ENCODE measurements at regions of chr3 and their contacts with region 1.

Region 1: GRCh38 chr3:136919799-136920580 is 37.8 kb upstream of the IL20RB start:
- DNase-seq: peak in 7 of 9 donors; percentile 8 to 51 (median 40)
- ATAC-seq: peak; percentile 94
- H3K4me3 ChIP-seq: no peak overlapping the region
- H3K4me3 Mint-ChIP-seq: peak overlapping the region in 8 of 10 donors; percentile 47 to 69 (median 60)
- H3K27ac ChIP-seq: peak overlapping the region; percentile 38
- H3K27ac Mint-ChIP-seq: peak overlapping the region in 6 of 9 donors; percentile 6 to 83 (median 70)
- H3K4me1 ChIP-seq: peaks cover 21 to 78% of the 10 kb centered on the region in 2 donors
- H3K4me1 Mint-ChIP-seq: peaks cover 60 to 94% (median 90%) of the 10 kb centered on the region in 7 donors
- H3K27me3 ChIP-seq: no peaks in the 10 kb centered on the region
- H3K27me3 Mint-ChIP-seq: no peaks in the 10 kb centered on the region

Region 2: DNA sequence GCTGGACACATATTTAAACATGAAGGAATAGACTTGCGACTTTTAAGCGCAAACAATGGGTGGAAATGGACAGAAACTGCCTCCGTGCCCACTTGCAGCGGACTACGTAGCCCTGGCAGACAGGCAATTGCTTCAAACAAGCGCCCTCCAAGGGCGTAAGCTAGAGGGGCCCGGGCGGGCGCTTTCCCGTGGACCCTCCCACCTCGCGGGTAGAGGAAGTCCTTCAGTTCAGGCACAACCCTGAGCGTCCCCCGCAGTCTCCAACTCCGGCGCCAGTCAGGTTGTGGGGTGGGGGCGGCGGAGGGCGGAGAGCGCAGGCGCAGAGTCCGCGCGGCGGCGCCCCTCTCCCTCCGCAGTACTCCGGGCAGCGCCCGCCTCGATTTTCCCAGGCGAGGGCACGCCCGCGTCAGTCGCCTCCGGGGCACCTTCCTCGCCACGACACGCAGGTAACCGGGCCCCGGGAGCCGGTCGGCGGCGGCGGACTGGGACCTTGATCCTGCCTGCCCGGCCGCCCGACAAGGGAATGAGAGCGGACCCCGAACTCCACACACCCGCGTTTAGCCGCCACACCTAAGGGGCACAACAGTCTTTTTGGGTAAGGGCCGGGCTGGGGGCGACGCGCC is 101.1 kb before region 1 on chr3 and contains the start of gene SLC35G2:
- CTCF ChIA-PET with region 1: no interaction called
- POLR2A ChIA-PET with region 1: no interaction called
- intact Hi-C with region 1: loop called in 1 of 2 experiments (anchors 1 kb)
- DNase-seq: peak in 4 of 9 donors; percentile 7 to 63 (median 10)
- ATAC-seq: peak; percentile 67
- H3K4me3 ChIP-seq: peak within 1 kb of the TSS; percentile 44
- H3K4me3 Mint-ChIP-seq: peak within 1 kb of the TSS; percentile 83 to 94 (median 86)
- H3K27ac ChIP-seq: no peak within 1 kb of the TSS
- H3K27ac Mint-ChIP-seq: peak within 1 kb of the TSS in 1 of 9 donors; percentile 52
- H3K4me1 ChIP-seq: peaks cover 6 to 10% of the 10 kb centered on the region in 2 donors
- H3K4me1 Mint-ChIP-seq: peaks cover 10 to 23% (median 19%) of the 10 kb centered on the region in 7 donors
- H3K27me3 ChIP-seq: peaks cover 0 to 3% of the 10 kb centered on the region in 2 donors
- H3K27me3 Mint-ChIP-seq: peaks cover 50 to 65% (median 56%) of the 10 kb centered on the region in 5 donors
- total RNA-seq, gene SLC35G2: 0.60 TPM in 1 of 5 experiments, not detected in the others

Region 3: DNA sequence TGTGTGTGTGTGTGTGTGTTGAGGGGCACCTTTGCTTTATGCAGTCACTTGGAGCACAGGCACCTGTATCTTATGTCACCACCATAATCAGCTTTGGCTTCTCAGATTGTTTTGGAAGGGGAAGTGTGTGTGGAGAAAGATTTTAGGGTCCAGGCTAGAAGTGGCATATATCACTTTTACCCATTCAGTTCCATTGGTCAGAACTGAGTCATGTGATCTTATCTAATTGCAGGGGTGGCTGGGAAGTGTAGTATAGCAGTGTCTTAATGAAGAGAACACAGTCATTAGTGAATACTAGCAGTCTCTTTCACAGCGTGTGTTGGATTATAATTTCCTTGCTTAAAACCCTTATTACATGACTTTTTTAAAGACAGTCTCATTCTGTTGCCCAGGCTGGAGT is 37.4 kb before region 1 on chr3:
- CTCF ChIA-PET with region 1: no interaction called
- POLR2A ChIA-PET with region 1: no interaction called
- intact Hi-C with region 1: loop called (anchors 2 kb)
- DNase-seq: peak in 3 of 9 donors; percentile 12 to 28 (median 28)
- ATAC-seq: peak; percentile 73
- H3K4me3 ChIP-seq: no peak overlapping the region
- H3K4me3 Mint-ChIP-seq: peak overlapping the region in 4 of 10 donors; percentile 9 to 60 (median 52)
- H3K27ac ChIP-seq: no peak overlapping the region
- H3K27ac Mint-ChIP-seq: peak overlapping the region in 7 of 9 donors; percentile 6 to 85 (median 55)
- H3K4me1 ChIP-seq: peaks cover 33 to 38% of the 10 kb centered on the region in 2 donors
- H3K4me1 Mint-ChIP-seq: peaks cover 39 to 97% (median 83%) of the 10 kb centered on the region in 7 donors
- H3K27me3 ChIP-seq: no peaks in the 10 kb centered on the region
- H3K27me3 Mint-ChIP-seq: no peaks in the 10 kb centered on the region

Region 4: DNA sequence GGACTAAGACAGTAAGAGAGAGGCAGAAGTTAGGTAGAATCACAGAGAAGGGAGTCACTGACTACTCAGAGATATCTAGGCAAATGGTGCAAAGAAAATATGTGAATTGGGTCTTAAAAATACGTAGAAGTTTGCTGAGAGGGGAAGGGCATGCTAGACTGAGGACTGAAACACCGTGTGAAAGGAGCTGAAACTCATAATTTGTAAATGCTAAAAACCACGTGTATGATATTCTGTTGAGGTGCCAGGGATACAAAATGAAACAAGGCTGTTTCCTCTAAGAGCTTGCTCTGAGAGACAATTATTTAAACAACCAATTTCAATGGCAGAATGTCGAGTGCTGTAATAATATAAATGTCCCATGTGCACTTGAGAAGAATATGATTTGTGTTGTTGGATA is 10.8 kb before region 1 on chr3:
- CTCF ChIA-PET with region 1: interaction called, 3 read pairs
- POLR2A ChIA-PET with region 1: interaction called, 7 read pairs
- intact Hi-C with region 1: loop called in 1 of 2 experiments (anchors 1 kb)
- DNase-seq: no peak
- ATAC-seq: peak; percentile 51
- H3K4me3 ChIP-seq: no peak overlapping the region
- H3K4me3 Mint-ChIP-seq: peak overlapping the region in 9 of 10 donors; percentile 7 to 67 (median 45)
- H3K27ac ChIP-seq: no peak overlapping the region
- H3K27ac Mint-ChIP-seq: peak overlapping the region; percentile 6 to 90 (median 53)
- H3K4me1 ChIP-seq: peaks cover 39 to 62% of the 10 kb centered on the region in 2 donors
- H3K4me1 Mint-ChIP-seq: peaks cover 50 to 94% (median 80%) of the 10 kb centered on the region in 7 donors
- H3K27me3 ChIP-seq: no peaks in the 10 kb centered on the region
- H3K27me3 Mint-ChIP-seq: no peaks in the 10 kb centered on the region

Region 5: DNA sequence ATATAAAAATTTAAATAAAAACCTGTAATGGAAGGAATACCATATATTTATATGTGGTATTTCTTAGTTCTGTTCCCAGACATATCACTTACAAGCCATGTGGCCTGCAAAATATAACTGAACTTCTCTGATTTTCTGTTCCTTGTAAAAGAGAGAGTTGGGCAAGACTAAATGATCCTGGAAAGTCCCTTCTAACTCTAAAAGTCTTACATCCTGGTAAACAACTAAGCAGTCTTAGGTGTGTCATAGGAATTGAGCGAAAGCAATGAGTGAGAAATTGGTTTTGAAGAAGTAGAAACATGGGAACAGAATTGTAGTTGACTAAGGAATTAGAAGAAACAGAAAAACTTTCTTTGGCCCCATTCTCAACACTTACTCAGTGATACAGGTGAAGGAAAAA is 12.5 kb after region 1 on chr3:
- CTCF ChIA-PET with region 1: no interaction called
- POLR2A ChIA-PET with region 1: no interaction called
- intact Hi-C with region 1: loop called in 1 of 2 experiments (anchors 1 kb)
- DNase-seq: no peak
- ATAC-seq: peak; percentile 37
- H3K4me3 ChIP-seq: no peak overlapping the region
- H3K4me3 Mint-ChIP-seq: peak overlapping the region in 2 of 10 donors; percentile 8 to 34
- H3K27ac ChIP-seq: no peak overlapping the region
- H3K27ac Mint-ChIP-seq: peak overlapping the region in 8 of 9 donors; percentile 22 to 83 (median 65)
- H3K4me1 ChIP-seq: peaks cover 16 to 18% of the 10 kb centered on the region in 2 donors
- H3K4me1 Mint-ChIP-seq: peaks cover 26 to 82% (median 75%) of the 10 kb centered on the region in 7 donors
- H3K27me3 ChIP-seq: no peaks in the 10 kb centered on the region
- H3K27me3 Mint-ChIP-seq: no peaks in the 10 kb centered on the region

Region 6: DNA sequence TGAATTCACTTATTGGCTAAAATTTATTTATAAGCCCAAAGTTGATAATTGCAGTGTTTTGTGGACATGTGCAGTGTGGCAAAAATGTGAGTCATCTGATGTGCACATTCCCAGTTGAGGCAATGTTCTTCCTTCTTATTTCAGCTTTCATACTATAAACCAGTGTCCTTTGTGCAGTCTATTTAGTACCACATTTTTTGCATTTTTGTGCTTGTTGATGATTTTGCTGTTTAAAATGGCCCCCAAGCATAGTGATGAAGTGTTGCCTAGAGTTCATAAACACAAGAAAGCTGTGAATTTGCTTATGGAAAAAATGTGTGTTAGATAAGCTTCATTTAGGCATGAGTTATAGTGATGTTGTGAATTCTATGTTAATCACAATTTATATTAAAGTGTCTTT is 18.3 kb after region 1 on chr3:
- CTCF ChIA-PET with region 1: no interaction called
- POLR2A ChIA-PET with region 1: no interaction called
- intact Hi-C with region 1: loop called in 1 of 2 experiments (anchors 2 kb)
- DNase-seq: no peak
- ATAC-seq: no peak
- H3K4me3 ChIP-seq: no peak overlapping the region
- H3K4me3 Mint-ChIP-seq: peak overlapping the region in 3 of 10 donors; percentile 2 to 66 (median 16)
- H3K27ac ChIP-seq: no peak overlapping the region
- H3K27ac Mint-ChIP-seq: peak overlapping the region in 1 of 9 donors; percentile 13
- H3K4me1 ChIP-seq: peaks cover 10 to 35% of the 10 kb centered on the region in 2 donors
- H3K4me1 Mint-ChIP-seq: peaks cover 45 to 82% (median 69%) of the 10 kb centered on the region in 7 donors
- H3K27me3 ChIP-seq: no peaks in the 10 kb centered on the region
- H3K27me3 Mint-ChIP-seq: no peaks in the 10 kb centered on the region

Region 7: GRCh38 chr3:137047240-137047639 is 127.2 kb after region 1 on chr3:
- CTCF ChIA-PET with region 1: no interaction called
- POLR2A ChIA-PET with region 1: no interaction called
- intact Hi-C with region 1: no loop called
- DNase-seq: no peak
- ATAC-seq: no peak
- H3K4me3 ChIP-seq: no peak overlapping the region
- H3K4me3 Mint-ChIP-seq: no peak overlapping the region
- H3K27ac ChIP-seq: no peak overlapping the region
- H3K27ac Mint-ChIP-seq: no peak overlapping the region
- H3K4me1 ChIP-seq: no peaks in the 10 kb centered on the region
- H3K4me1 Mint-ChIP-seq: no peaks in the 10 kb centered on the region
- H3K27me3 ChIP-seq: no peaks in the 10 kb centered on the region
- H3K27me3 Mint-ChIP-seq: peaks cover 0 to 22% (median 7%) of the 10 kb centered on the region in 5 donors

Measured in naive thymus-derived CD4-positive, alpha-beta T cell (primary cell).